ENCODE measurements at regions of chr21 and their contacts with region 1.

Region 1: DNA sequence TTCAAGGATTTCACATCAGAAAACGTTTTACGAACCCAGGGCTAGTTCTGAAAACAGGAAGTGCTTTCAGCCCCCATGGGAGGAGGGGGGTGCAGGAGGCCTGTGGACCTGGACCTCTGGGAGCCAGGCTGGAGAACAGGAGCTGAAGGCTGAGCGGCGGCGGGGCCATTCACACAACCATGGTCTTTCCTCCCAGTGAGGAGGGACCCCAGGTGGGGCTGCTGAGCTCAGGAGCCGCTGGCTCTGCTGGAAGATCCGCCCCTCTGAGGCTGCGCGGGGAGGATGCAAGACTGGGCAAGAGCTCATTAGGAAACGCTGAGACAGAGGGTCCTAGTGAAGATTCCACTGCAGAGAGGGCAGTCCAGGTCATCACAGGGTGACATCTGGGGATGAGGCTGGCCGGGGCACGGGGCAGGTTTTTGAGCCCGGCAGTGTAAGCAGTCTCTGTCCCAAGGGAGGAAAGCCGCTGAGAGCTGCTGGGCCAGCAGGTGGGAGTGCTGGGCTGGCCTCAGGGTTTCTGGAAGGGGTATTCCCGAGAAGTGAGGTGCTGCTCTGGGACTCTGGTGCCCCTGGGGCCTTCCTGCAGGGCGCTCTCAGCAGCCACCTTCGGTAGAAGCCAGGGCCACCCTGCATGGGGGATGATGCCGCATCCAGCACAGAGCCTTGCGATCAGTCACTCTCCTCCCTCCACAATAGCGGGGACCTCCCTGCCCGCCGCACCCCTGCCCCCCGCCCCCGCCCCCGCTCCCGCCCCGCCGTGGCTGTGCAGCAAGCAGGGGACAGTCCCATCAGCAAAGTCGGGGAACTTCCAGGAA is 7.5 kb downstream of the MX2 start:
- DNase-seq: peak; percentile 62
- ATAC-seq: peak; percentile 69
- H3K4me3 Mint-ChIP-seq: peak overlapping the region; percentile 80
- H3K27ac Mint-ChIP-seq: peak overlapping the region; percentile 95
- H3K4me1 Mint-ChIP-seq: peaks cover 63% of the 10 kb centered on the region
- H3K27me3 Mint-ChIP-seq: no peaks in the 10 kb centered on the region

Region 2: GRCh38 chr21:41419911-41420862 is 50.9 kb after region 1 on chr21:
- POLR2A ChIA-PET with region 1: interaction called, 233 read pairs
- DNase-seq: peak; percentile 77
- ATAC-seq: peak; percentile 84
- H3K4me3 Mint-ChIP-seq: peak overlapping the region; percentile 93
- H3K27ac Mint-ChIP-seq: peak overlapping the region; percentile 98
- H3K4me1 Mint-ChIP-seq: peaks cover 52% of the 10 kb centered on the region
- H3K27me3 Mint-ChIP-seq: no peaks in the 10 kb centered on the region

Measured in activated naive CD8-positive, alpha-beta T cell treated with anti-CD3 and anti-CD28 coated beads, Interleukin-2, amount 10 ng/mL, durations not matched to agents 7 days and 5 days (primary cell).